Transverse colon (tissue), 4 donors: ENCODE measurements at regions of chr18 and their contacts with region 1.

Region 1: GRCh38 chr18:607930-608329 is 11.1 kb downstream of the CLUL1 start:
- DNase-seq: no peak
- H3K4me3 ChIP-seq: no peak overlapping the region
- H3K27ac ChIP-seq: no peak overlapping the region
- H3K4me1 ChIP-seq: no peaks in the 10 kb centered on the region
- H3K27me3 ChIP-seq: no peaks in the 10 kb centered on the region
- CTCF ChIP-seq: no peak
- EP300 ChIP-seq: no peak
- POLR2A ChIP-seq: no peak

Region 2: GRCh38 chr18:286515-287310 is 321.2 kb before region 1 on chr18:
- in situ Hi-C with region 1: loop called in 2 of 4 experiments (anchors 5 to 10 kb)
- intact Hi-C with region 1: no loop called
- DNase-seq: no peak
- H3K4me3 ChIP-seq: no peak overlapping the region
- H3K27ac ChIP-seq: no peak overlapping the region
- H3K4me1 ChIP-seq: no peaks in the 10 kb centered on the region
- H3K27me3 ChIP-seq: no peaks in the 10 kb centered on the region
- CTCF ChIP-seq: peak; percentile 27 to 50 (median 35)
- EP300 ChIP-seq: no peak
- POLR2A ChIP-seq: no peak

Region 3: DNA sequence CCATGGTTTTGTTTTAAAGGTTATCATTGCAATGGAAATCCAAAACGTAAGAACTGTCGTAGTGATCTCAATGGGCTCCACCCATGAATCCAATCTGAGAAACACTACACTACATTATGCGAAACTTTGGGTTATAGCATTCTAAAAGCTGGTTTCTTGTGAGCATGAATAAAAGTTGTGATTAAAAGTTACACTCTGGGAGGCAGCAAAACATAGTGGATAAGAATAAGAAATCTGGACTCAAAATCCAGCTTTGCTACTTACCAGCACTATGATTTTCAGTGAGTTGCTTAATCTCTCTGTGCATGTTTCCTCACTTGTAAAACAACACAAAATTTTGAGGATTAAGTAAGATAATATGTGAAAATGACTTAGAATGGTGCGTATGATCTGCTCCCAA is 314.4 kb before region 1 on chr18:
- in situ Hi-C with region 1: loop called in 2 of 4 experiments (anchors 5 to 10 kb)
- intact Hi-C with region 1: loop called (anchors 5 kb)
- DNase-seq: no peak
- H3K4me3 ChIP-seq: no peak overlapping the region
- H3K27ac ChIP-seq: no peak overlapping the region
- H3K4me1 ChIP-seq: no peaks in the 10 kb centered on the region
- H3K27me3 ChIP-seq: no peaks in the 10 kb centered on the region
- CTCF ChIP-seq: no peak
- EP300 ChIP-seq: no peak
- POLR2A ChIP-seq: no peak